Activated naive CD4-positive, alpha-beta T cell treated with anti-CD3 and anti-CD28 coated beads for 36 hours (primary cell): ENCODE measurements at regions of chr17 and their contacts with region 1.

Region 1: GRCh38 chr17:49191917-49192741 is 18.2 kb downstream of the GNGT2 start:
- DNase-seq: peak; percentile 95
- H3K4me3 Mint-ChIP-seq: peak overlapping the region; percentile 90
- H3K27ac Mint-ChIP-seq: peak overlapping the region; percentile 98
- H3K4me1 Mint-ChIP-seq: peaks cover 20% of the 10 kb centered on the region
- H3K27me3 Mint-ChIP-seq: no peaks in the 10 kb centered on the region

Region 2: GRCh38 chr17:48107168-48108132 is 1084.7 kb before region 1 on chr17 and contains the start of gene SNX11:
- CTCF ChIA-PET with region 1: no interaction called
- intact Hi-C with region 1: loop called (anchors 10 kb)
- DNase-seq: peak; percentile 96
- H3K4me3 Mint-ChIP-seq: peak within 1 kb of the TSS; percentile 97
- H3K27ac Mint-ChIP-seq: peak within 1 kb of the TSS; percentile 93
- H3K4me1 Mint-ChIP-seq: peaks cover 56% of the 10 kb centered on the region
- H3K27me3 Mint-ChIP-seq: no peaks in the 10 kb centered on the region
- total RNA-seq, gene SNX11: 20.2 to 23.0 TPM

Region 3: GRCh38 chr17:48892940-48893645 is 299.0 kb before region 1 on chr17:
- CTCF ChIA-PET with region 1: no interaction called
- intact Hi-C with region 1: loop called (anchors 1 kb)
- DNase-seq: peak; percentile 21
- H3K4me3 Mint-ChIP-seq: peak overlapping the region; percentile 99
- H3K27ac Mint-ChIP-seq: peak overlapping the region; percentile 95
- H3K4me1 Mint-ChIP-seq: peaks cover 25% of the 10 kb centered on the region
- H3K27me3 Mint-ChIP-seq: no peaks in the 10 kb centered on the region

Region 4: GRCh38 chr17:49210158-49211029 is 18.3 kb after region 1 on chr17 and contains the starts of genes ABI3 and GNGT2:
- CTCF ChIA-PET with region 1: interaction called, 3 read pairs
- intact Hi-C with region 1: loop called (anchors 1 kb)
- DNase-seq: peak; percentile 88
- H3K4me3 Mint-ChIP-seq: peak within 1 kb of the TSS; percentile 85
- H3K27ac Mint-ChIP-seq: peak within 1 kb of the TSS; percentile 94
- H3K4me1 Mint-ChIP-seq: peaks cover 58% of the 10 kb centered on the region
- H3K27me3 Mint-ChIP-seq: no peaks in the 10 kb centered on the region
- total RNA-seq, gene ABI3: 18.7 to 18.9 TPM
- total RNA-seq, gene GNGT2: 40.3 to 41.3 TPM

Region 5: GRCh38 chr17:49230636-49231562 is 38.8 kb after region 1 on chr17 and contains the start of gene PHOSPHO1:
- CTCF ChIA-PET with region 1: interaction called, 28 read pairs
- intact Hi-C with region 1: loop called (anchors 1 kb)
- DNase-seq: peak; percentile 82
- H3K4me3 Mint-ChIP-seq: peak within 1 kb of the TSS; percentile 75
- H3K27ac Mint-ChIP-seq: no peak within 1 kb of the TSS
- H3K4me1 Mint-ChIP-seq: peaks cover 8% of the 10 kb centered on the region
- H3K27me3 Mint-ChIP-seq: peaks cover 16% of the 10 kb centered on the region
- total RNA-seq, gene PHOSPHO1: not detected